Heart right ventricle (tissue), 16 donors: ENCODE measurements at regions of chr4 and their contacts with region 1.

Region 1: GRCh38 chr4:183876268-183876934 is 28.7 kb upstream of the STOX2 start:
- DNase-seq: peak; percentile 88
- ATAC-seq: peak; percentile 88 to 98 (median 96)
- H3K4me3 ChIP-seq: peak overlapping the region in 9 of 10 donors; percentile 23 to 51 (median 44)
- H3K27ac ChIP-seq: peak overlapping the region; percentile 71 to 88 (median 81)
- H3K4me1 ChIP-seq: peaks cover 0 to 34% (median 22%) of the 10 kb centered on the region in 9 donors
- H3K27me3 ChIP-seq: no peaks in the 10 kb centered on the region
- CTCF ChIP-seq: no peak

Region 2: GRCh38 chr4:183960046-183960420 is 83.6 kb after region 1 on chr4:
- intact Hi-C with region 1: loop called in 1 of 10 experiments (anchors 10 kb)
- DNase-seq: peak; percentile 21 to 73
- ATAC-seq: peak; percentile 65 to 95 (median 83)
- H3K4me3 ChIP-seq: peak overlapping the region in 8 of 10 donors; percentile 15 to 37 (median 28)
- H3K27ac ChIP-seq: peak overlapping the region in 5 of 10 donors; percentile 22 to 63 (median 48)
- H3K4me1 ChIP-seq: peaks cover 9 to 52% (median 24%) of the 10 kb centered on the region in 9 donors
- H3K27me3 ChIP-seq: no peaks in the 10 kb centered on the region
- CTCF ChIP-seq: no peak

Region 3: GRCh38 chr4:183987987-183988392 is 111.6 kb after region 1 on chr4:
- intact Hi-C with region 1: loop called in 1 of 10 experiments (anchors 10 kb)
- DNase-seq: peak; percentile 44 to 82
- ATAC-seq: peak; percentile 90 to 96 (median 93)
- H3K4me3 ChIP-seq: peak overlapping the region in 9 of 10 donors; percentile 19 to 60 (median 47)
- H3K27ac ChIP-seq: peak overlapping the region; percentile 74 to 93 (median 84)
- H3K4me1 ChIP-seq: peaks cover 0 to 47% (median 31%) of the 10 kb centered on the region in 9 donors
- H3K27me3 ChIP-seq: no peaks in the 10 kb centered on the region
- CTCF ChIP-seq: no peak

Region 4: GRCh38 chr4:184370711-184371389 is 494.4 kb after region 1 on chr4:
- intact Hi-C with region 1: no loop called
- DNase-seq: no peak
- ATAC-seq: no peak
- H3K4me3 ChIP-seq: no peak overlapping the region
- H3K27ac ChIP-seq: peak overlapping the region in 1 of 10 donors; percentile 62
- H3K4me1 ChIP-seq: peaks cover 0 to 26% (median 0%) of the 10 kb centered on the region in 9 donors
- H3K27me3 ChIP-seq: no peaks in the 10 kb centered on the region
- CTCF ChIP-seq: no peak